Left colon (tissue), 2 donors: ENCODE measurements at regions of chr11 and their contacts with region 1.

Region 1: GRCh38 chr11:61792310-61793085 is at the starts of genes FEN1 and TMEM258:
- DNase-seq: peak; percentile 91 to 93
- ATAC-seq: peak; percentile 90
- total RNA-seq, gene FEN1: 7.7 to 13.3 TPM
- total RNA-seq, gene TMEM258: 87.3 to 91.8 TPM

Region 2: GRCh38 chr11:61598886-61599868 is 193.3 kb before region 1 on chr11:
- intact Hi-C with region 1: no loop called
- DNase-seq: no peak
- ATAC-seq: no peak

Region 3: DNA sequence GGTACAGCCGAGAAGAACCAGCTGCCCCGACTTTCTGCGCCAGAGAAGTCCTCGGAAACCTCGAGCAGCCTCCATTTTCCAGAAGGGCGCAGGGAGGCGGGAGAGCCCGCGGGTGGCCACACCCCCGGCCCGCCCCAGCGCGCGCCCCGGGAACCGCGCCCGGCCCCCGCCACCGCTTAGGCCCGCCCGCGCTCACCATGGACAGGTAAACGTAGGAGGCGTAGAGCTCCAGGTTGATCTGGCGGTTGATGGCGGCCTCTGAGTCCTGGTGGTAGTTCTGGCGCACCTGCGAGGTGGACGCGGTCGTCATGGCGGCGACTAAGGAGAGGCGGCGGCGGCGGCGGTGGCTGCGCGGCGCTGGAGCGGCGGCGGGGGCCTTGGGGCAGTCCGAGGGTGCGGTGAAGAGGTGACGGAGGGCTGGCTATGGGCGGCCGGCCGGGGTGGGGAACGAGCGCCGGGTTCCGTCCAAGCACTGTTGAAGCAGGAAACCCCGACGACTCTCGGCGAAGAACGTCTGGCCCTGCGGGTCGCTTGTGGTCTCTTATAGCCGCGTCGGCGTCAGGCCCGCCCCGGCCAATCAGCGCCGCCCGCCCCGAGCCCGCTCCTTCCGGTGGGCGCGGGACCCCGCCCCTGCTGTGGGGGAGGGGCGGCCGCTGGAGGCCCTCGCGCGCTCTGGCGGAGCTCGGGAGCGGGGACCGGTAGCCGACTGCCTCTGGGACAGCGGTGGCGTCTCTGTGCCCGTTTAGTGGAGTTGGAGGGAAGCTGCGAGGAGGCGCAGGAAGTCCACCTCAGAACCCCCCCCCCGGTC is 174.8 kb after region 1 on chr11 and contains the start of gene FTH1:
- intact Hi-C with region 1: loop called in 1 of 2 experiments (anchors 10 kb)
- DNase-seq: peak; percentile 92 to 95
- ATAC-seq: peak; percentile 78
- total RNA-seq, gene FTH1: 4,322 to 5,591 TPM